Endothelial cell of umbilical vein (primary cell): ENCODE measurements at regions of chr7 and their contacts with region 1.

Region 1: DNA sequence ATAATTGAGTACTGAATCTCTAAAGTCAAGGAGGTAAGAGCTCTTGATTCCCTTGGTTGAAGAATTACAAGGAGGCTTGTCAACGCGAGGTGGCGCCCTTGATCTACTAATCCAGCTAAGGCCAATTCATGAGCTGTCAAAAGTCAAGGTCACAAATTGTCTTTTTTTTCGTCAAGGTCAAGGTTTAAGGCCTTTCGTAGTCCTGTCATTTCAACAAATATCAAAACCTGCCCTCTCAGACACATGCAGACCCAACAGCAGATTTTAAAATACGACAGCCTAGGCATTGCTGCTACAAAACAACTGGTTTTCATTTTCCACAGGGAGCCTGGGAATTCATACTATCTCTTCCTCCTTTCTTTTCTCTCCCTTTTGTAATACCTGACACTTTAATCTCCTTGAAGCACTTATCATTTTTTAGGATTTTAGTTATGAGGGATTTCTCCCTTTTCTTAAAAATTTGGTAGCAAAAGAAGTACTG is 3.6 kb downstream of the HOXA13 start:
- DNase-seq: peak; percentile 84
- H3K4me3 ChIP-seq: no peak overlapping the region
- H3K27ac ChIP-seq: no peak overlapping the region
- H3K4me1 ChIP-seq: peaks cover 16% of the 10 kb centered on the region
- H3K27me3 ChIP-seq: peaks cover 52 to 78% of the 10 kb centered on the region in 2 experiments
- CTCF ChIP-seq: peak; percentile 66 to 68
- POLR2A ChIP-seq: no peak

Region 2: GRCh38 chr7:26993816-26994810 is 202.2 kb before region 1 on chr7:
- CTCF ChIA-PET with region 1: no interaction called
- POLR2A ChIA-PET with region 1: no interaction called
- dilution Hi-C with region 1: no loop called
- intact Hi-C with region 1: no loop called
- DNase-seq: no peak
- H3K4me3 ChIP-seq: no peak overlapping the region
- H3K27ac ChIP-seq: no peak overlapping the region
- H3K4me1 ChIP-seq: no peaks in the 10 kb centered on the region
- H3K27me3 ChIP-seq: no peaks in the 10 kb centered on the region
- CTCF ChIP-seq: no peak
- POLR2A ChIP-seq: no peak

Region 3: DNA sequence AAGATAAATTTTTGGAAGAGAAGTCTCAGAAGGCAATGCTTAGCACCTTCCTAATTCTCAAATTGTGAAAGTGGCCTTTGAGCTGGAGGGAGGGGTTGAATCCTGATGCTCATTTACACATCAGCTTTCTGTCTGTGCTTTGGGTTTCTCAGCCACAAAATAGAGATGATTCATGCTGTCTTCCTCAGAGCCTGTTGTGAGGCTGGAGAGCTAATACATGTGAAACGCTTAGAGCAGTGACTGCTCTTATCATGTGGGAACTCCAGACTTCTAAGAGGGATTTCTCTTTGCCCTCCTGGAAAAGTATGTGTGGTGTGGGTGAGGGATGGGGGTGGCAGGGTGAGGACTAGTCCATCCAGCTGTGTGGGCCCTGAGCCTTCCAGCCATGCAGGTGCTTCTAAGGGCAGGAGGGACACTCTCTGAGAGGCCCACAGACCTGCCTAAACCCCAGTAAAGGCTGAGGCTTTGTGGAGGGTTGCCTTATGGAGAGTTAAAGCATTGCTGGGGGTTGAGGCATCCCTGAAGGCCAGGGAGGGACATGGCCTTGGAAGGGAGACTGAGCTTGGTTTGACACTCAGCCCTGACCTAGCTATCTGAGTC is 41.5 kb after region 1 on chr7:
- CTCF ChIA-PET with region 1: interaction called, 6 read pairs
- POLR2A ChIA-PET with region 1: no interaction called
- dilution Hi-C with region 1: no loop called
- intact Hi-C with region 1: loop called (anchors 2 kb)
- DNase-seq: no peak
- H3K4me3 ChIP-seq: no peak overlapping the region
- H3K27ac ChIP-seq: no peak overlapping the region
- H3K4me1 ChIP-seq: peaks cover 12% of the 10 kb centered on the region
- H3K27me3 ChIP-seq: peaks cover 65 to 70% of the 10 kb centered on the region in 2 experiments
- CTCF ChIP-seq: no peak
- POLR2A ChIP-seq: no peak

Region 4: GRCh38 chr7:27689591-27690164 is 493.4 kb after region 1 on chr7:
- CTCF ChIA-PET with region 1: interaction called, 4 read pairs
- POLR2A ChIA-PET with region 1: no interaction called
- dilution Hi-C with region 1: no loop called
- intact Hi-C with region 1: loop called (anchors 1 kb)
- DNase-seq: peak; percentile 69
- H3K4me3 ChIP-seq: no peak overlapping the region
- H3K27ac ChIP-seq: no peak overlapping the region
- H3K4me1 ChIP-seq: peaks cover 10% of the 10 kb centered on the region
- H3K27me3 ChIP-seq: no peaks in the 10 kb centered on the region
- CTCF ChIP-seq: peak; percentile 42 to 72
- POLR2A ChIP-seq: no peak

Region 5: DNA sequence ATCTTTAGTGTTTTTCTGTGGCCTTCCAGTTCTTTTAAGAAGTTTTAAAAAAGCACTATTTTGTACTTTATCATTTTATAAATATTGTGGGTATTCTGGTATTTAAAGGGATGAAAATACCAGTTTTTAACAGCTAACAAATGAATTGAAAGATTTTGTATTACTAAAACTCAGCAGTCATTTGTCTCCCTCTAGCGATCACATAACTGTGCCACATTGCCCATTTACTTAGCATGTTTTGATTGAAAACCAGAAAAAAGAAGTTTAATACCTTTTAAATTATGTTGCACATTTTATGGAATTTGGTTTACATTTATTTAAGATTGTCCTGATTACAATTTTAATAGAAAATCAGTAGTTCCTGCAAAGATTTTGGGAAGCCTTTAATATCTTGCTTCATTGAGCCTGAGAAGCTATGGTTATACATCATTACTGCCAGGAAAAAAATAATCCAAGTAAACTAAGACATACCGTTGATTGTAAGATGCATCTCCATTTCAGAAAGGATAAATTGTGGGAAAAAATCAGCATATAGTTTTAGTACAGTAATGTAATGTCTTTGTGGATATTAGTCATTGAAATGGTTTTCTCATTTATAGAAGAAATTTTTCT is 578.5 kb after region 1 on chr7:
- CTCF ChIA-PET with region 1: interaction called, 80 read pairs
- POLR2A ChIA-PET with region 1: no interaction called
- dilution Hi-C with region 1: no loop called
- intact Hi-C with region 1: loop called (anchors 1 kb)
- DNase-seq: peak; percentile 59
- H3K4me3 ChIP-seq: no peak overlapping the region
- H3K27ac ChIP-seq: no peak overlapping the region
- H3K4me1 ChIP-seq: no peaks in the 10 kb centered on the region
- H3K27me3 ChIP-seq: no peaks in the 10 kb centered on the region
- CTCF ChIP-seq: peak; percentile 45 to 46
- POLR2A ChIP-seq: no peak

Region 6: GRCh38 chr7:27933671-27934565 is 737.6 kb after region 1 on chr7:
- CTCF ChIA-PET with region 1: interaction called, 12 read pairs
- POLR2A ChIA-PET with region 1: no interaction called
- dilution Hi-C with region 1: no loop called
- intact Hi-C with region 1: no loop called
- DNase-seq: peak; percentile 19
- H3K4me3 ChIP-seq: no peak overlapping the region
- H3K27ac ChIP-seq: no peak overlapping the region
- H3K4me1 ChIP-seq: no peaks in the 10 kb centered on the region
- H3K27me3 ChIP-seq: no peaks in the 10 kb centered on the region
- CTCF ChIP-seq: peak; percentile 13 to 22
- POLR2A ChIP-seq: no peak

Region 7: DNA sequence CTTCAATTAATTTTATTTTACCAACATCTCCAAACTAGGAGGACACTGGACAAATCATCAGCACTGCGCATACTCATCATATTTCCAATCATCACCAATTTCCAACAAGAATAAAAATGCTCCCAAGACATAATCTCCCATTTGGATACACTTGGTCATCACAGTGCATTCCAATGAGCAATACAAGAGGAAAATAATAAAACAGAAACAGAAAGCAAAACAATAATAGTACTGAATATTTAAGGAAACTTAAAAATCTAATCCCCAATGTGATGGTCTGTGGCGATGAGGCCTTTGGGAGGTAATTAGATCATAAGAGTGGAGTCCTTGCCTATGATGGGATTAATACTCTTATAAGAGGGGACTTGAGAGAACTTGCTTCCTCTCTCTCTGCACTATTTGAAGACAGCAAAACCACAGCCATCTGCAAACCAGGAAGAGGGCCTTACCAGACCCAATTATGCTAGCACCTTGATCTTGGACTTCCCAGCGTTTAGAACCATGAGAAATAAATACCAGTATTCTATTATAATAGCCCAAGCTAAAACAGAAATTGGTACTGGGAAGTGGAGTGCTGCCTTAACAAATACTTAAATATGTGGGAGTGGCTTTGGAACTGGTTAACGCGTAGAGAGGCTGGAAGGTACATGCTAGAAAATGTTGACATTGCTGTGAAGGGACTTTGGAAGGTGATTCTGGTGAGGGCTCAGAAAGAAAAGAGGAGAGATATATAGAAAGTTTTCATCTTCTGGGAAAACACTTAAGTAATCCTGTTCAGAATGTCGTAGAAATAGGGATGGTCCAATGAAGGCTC is 892.8 kb after region 1 on chr7:
- CTCF ChIA-PET with region 1: interaction called, 65 read pairs
- POLR2A ChIA-PET with region 1: no interaction called
- dilution Hi-C with region 1: no loop called
- intact Hi-C with region 1: loop called (anchors 1 kb)
- DNase-seq: no peak
- H3K4me3 ChIP-seq: no peak overlapping the region
- H3K27ac ChIP-seq: no peak overlapping the region
- H3K4me1 ChIP-seq: no peaks in the 10 kb centered on the region
- H3K27me3 ChIP-seq: no peaks in the 10 kb centered on the region
- CTCF ChIP-seq: no peak
- POLR2A ChIP-seq: no peak